Activated naive CD4-positive, alpha-beta T cell treated with anti-CD3 and anti-CD28 coated beads for 36 hours (primary cell): ENCODE measurements at regions of chr9 and their contacts with region 1.

Region 1: GRCh38 chr9:97990266-97990665 is 7.1 kb downstream of the ANP32B start:
- DNase-seq: no peak
- H3K4me3 Mint-ChIP-seq: no peak overlapping the region
- H3K27ac Mint-ChIP-seq: peak overlapping the region; percentile 68
- H3K4me1 Mint-ChIP-seq: peaks cover 81% of the 10 kb centered on the region
- H3K27me3 Mint-ChIP-seq: no peaks in the 10 kb centered on the region

Region 2: DNA sequence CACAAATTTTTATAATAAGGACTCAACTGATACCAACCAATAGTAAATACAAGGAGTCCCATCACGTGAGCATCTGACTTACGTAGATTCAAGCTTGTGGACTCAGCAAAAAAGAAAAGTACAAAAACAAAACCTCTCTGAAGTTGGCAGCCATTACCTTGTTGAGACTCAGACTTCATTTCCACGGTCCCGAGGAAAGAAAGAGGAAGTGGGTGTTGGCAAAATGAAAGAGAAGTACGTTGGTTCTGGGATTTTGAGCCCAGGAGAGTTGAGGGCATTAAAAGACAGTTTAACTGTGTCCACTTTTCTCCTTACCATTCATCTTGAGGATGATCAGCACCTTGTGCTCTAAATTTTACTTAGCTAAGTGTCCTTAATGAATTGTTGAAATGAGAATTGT is 329.9 kb before region 1 on chr9:
- CTCF ChIA-PET with region 1: no interaction called
- intact Hi-C with region 1: no loop called
- DNase-seq: no peak
- H3K4me3 Mint-ChIP-seq: no peak overlapping the region
- H3K27ac Mint-ChIP-seq: no peak overlapping the region
- H3K4me1 Mint-ChIP-seq: peaks cover 11% of the 10 kb centered on the region
- H3K27me3 Mint-ChIP-seq: no peaks in the 10 kb centered on the region

Region 3: DNA sequence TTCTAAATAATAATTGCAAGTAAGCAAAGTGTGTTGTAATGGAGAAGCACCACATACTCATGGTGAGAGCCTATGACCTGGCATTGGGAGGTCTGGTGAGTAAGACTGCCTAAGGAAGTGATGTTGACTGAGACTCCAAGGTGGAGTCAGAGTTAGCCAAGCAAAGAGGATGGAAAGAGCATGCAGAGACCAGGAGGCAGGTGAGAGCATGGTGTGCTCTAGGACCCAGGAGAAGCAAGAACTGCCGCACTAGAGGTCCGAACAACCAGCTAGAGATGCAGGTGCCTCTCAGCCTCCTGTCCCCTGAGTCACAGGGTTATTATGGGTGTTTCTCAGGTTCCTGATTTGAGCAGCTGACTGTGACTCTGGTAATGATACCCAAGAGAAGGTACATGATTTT is 20.2 kb after region 1 on chr9:
- CTCF ChIA-PET with region 1: interaction called, 8 read pairs
- intact Hi-C with region 1: loop called (anchors 2 kb)
- DNase-seq: peak; percentile 34
- H3K4me3 Mint-ChIP-seq: no peak overlapping the region
- H3K27ac Mint-ChIP-seq: no peak overlapping the region
- H3K4me1 Mint-ChIP-seq: peaks cover 27% of the 10 kb centered on the region
- H3K27me3 Mint-ChIP-seq: no peaks in the 10 kb centered on the region